Naive thymus-derived CD4-positive, alpha-beta T cell (primary cell): ENCODE measurements at regions of chr2 and their contacts with region 1.

Region 1: GRCh38 chr2:199955339-199956261 is at the starts of genes MAIP1 and TYW5:
- DNase-seq: peak; percentile 69 to 85 (median 79)
- ATAC-seq: peak; percentile 93
- H3K4me3 ChIP-seq: peak within 1 kb of the TSS; percentile 95
- H3K4me3 Mint-ChIP-seq: peak within 1 kb of the TSS; percentile 96 to 99 (median 98)
- H3K27ac ChIP-seq: peak within 1 kb of the TSS; percentile 84
- H3K27ac Mint-ChIP-seq: peak within 1 kb of the TSS; percentile 93 to 98 (median 95)
- H3K4me1 ChIP-seq: peaks cover 27 to 34% of the 10 kb centered on the region in 2 donors
- H3K4me1 Mint-ChIP-seq: peaks cover 31 to 72% (median 59%) of the 10 kb centered on the region in 7 donors
- H3K27me3 ChIP-seq: no peaks in the 10 kb centered on the region
- H3K27me3 Mint-ChIP-seq: no peaks in the 10 kb centered on the region
- total RNA-seq, gene MAIP1: 14.5 to 27.8 (median 19.8) TPM
- total RNA-seq, gene TYW5: 6.3 to 13.3 (median 11.2) TPM

Region 2: GRCh38 chr2:199911052-199911876 is 44.3 kb before region 1 on chr2 and contains the start of gene C2orf69:
- CTCF ChIA-PET with region 1: no interaction called
- POLR2A ChIA-PET with region 1: interaction called, 3 read pairs
- intact Hi-C with region 1: loop called (anchors 1 kb)
- DNase-seq: peak; percentile 80 to 92 (median 83)
- ATAC-seq: peak; percentile 93
- H3K4me3 ChIP-seq: peak within 1 kb of the TSS; percentile 75
- H3K4me3 Mint-ChIP-seq: peak within 1 kb of the TSS; percentile 89 to 100 (median 98)
- H3K27ac ChIP-seq: peak within 1 kb of the TSS; percentile 89
- H3K27ac Mint-ChIP-seq: peak within 1 kb of the TSS; percentile 72 to 95 (median 94)
- H3K4me1 ChIP-seq: peaks cover 11 to 19% of the 10 kb centered on the region in 2 donors
- H3K4me1 Mint-ChIP-seq: peaks cover 26 to 47% (median 37%) of the 10 kb centered on the region in 7 donors
- H3K27me3 ChIP-seq: no peaks in the 10 kb centered on the region
- H3K27me3 Mint-ChIP-seq: peaks cover 0 to 14% (median 8%) of the 10 kb centered on the region in 5 donors
- total RNA-seq, gene C2orf69: 10.1 to 15.4 (median 12.7) TPM

Region 3: DNA sequence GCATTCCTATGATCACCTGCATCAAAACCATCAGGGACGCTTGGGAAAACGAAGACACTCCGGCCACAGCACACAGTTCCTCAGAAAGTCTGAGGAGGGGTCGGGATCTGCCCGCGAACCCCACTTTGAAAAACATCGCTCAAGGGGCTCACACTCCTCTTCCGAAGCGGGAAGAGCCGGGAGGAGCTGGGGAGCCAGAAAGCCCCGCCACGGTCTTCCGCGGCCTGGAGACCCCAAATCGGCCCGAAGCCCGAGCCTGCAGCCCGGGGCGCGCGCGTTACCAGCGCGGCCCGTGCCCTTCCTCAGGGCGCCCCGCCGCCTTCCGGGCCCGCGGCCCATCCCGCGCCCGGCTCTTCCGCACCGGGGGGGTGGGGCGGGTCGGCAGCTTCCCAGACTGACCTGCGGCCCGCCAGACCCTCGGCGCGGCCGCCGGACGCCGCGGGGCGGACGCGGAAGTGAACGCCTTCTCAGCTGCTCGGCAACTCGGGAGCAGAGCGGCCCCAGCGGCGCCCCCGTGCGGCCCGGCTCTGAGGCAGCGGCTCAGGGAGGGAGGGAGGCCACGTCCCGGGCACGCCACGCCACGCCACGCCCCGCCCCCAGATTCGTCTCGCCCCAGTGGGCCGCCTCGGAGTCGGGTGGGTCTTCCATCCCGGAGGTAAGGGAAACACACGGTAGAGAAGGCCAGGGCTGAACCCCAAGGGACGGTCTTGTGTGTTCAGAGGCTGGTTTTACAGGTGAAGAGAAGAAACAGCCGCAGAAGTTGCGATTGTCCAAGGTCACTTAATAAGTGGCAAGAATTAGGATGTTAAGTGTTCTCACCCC is 554.2 kb after region 1 on chr2 and contains the start of gene KCTD18:
- CTCF ChIA-PET with region 1: no interaction called
- POLR2A ChIA-PET with region 1: no interaction called
- intact Hi-C with region 1: loop called in 1 of 2 experiments (anchors 1 kb)
- DNase-seq: peak; percentile 82 to 93 (median 87)
- ATAC-seq: peak; percentile 100
- H3K4me3 ChIP-seq: peak within 1 kb of the TSS; percentile 53
- H3K4me3 Mint-ChIP-seq: peak within 1 kb of the TSS; percentile 83 to 98 (median 94)
- H3K27ac ChIP-seq: peak within 1 kb of the TSS; percentile 74
- H3K27ac Mint-ChIP-seq: peak within 1 kb of the TSS; percentile 88 to 97 (median 95)
- H3K4me1 ChIP-seq: peaks cover 6 to 22% of the 10 kb centered on the region in 2 donors
- H3K4me1 Mint-ChIP-seq: peaks cover 10 to 51% (median 34%) of the 10 kb centered on the region in 7 donors
- H3K27me3 ChIP-seq: no peaks in the 10 kb centered on the region
- H3K27me3 Mint-ChIP-seq: no peaks in the 10 kb centered on the region
- total RNA-seq, gene KCTD18: 14.9 to 20.8 (median 18.6) TPM

Region 4: DNA sequence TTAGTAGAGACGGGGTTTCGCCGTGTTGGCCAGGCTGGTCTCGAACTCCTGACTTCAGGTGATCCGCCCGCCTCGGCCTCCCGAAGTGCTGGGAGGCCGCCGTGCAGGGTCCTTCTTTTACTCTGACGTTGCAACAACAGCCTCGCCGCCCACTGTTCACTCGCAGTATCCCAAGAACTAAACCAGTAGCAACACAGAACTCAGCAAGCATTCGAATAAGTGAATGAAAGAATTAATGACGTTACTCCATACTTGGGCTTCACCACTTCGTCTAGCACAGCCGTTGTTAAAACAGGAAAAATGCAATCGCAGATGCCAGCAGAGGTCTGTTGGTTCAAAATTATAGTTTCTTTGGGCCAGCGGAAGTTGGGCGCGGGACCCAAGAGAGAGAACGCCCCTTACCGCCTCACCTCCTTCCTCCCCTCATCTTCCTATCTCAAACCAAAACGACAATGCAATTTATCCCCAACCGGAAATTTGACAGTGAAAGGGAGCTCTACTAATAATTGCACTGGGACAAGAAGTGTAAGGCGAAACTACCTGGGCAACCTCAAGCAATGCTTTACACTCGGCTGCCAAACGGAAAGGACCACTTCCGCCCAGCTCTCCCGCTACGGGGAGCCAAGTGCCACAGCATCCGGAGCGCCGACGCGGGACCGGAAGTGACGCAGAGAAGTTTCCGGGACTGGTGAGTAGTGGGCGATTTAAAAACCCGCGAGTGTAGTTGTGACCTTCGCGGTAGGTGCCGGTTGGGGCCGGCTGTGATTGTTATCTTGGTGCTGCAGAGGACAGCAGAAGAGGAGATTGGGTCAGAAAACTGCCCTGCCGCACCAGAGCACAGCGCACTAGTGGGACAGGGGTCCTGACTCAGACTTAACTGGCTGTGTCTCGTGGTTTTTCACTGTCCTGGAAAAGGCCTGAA is 933.4 kb after region 1 on chr2 and contains the starts of genes NIF3L1 and PPIL3:
- CTCF ChIA-PET with region 1: no interaction called
- POLR2A ChIA-PET with region 1: no interaction called
- intact Hi-C with region 1: loop called in 1 of 2 experiments (anchors 2 kb)
- DNase-seq: peak; percentile 88 to 97 (median 95)
- ATAC-seq: peak; percentile 89
- H3K4me3 ChIP-seq: peak within 1 kb of the TSS; percentile 83
- H3K4me3 Mint-ChIP-seq: peak within 1 kb of the TSS; percentile 88 to 100 (median 96)
- H3K27ac ChIP-seq: peak within 1 kb of the TSS; percentile 86
- H3K27ac Mint-ChIP-seq: peak within 1 kb of the TSS; percentile 97 to 100 (median 100)
- H3K4me1 ChIP-seq: peaks cover 23 to 26% of the 10 kb centered on the region in 2 donors
- H3K4me1 Mint-ChIP-seq: peaks cover 35 to 75% (median 60%) of the 10 kb centered on the region in 7 donors
- H3K27me3 ChIP-seq: no peaks in the 10 kb centered on the region
- H3K27me3 Mint-ChIP-seq: no peaks in the 10 kb centered on the region
- total RNA-seq, gene NIF3L1: 11.5 to 33.9 (median 31.4) TPM
- total RNA-seq, gene PPIL3: 28.5 to 69.7 (median 49.1) TPM